CD8-positive, alpha-beta memory T cell (primary cell): ENCODE measurements at regions of chr17 and their contacts with region 1.

Region 1: DNA sequence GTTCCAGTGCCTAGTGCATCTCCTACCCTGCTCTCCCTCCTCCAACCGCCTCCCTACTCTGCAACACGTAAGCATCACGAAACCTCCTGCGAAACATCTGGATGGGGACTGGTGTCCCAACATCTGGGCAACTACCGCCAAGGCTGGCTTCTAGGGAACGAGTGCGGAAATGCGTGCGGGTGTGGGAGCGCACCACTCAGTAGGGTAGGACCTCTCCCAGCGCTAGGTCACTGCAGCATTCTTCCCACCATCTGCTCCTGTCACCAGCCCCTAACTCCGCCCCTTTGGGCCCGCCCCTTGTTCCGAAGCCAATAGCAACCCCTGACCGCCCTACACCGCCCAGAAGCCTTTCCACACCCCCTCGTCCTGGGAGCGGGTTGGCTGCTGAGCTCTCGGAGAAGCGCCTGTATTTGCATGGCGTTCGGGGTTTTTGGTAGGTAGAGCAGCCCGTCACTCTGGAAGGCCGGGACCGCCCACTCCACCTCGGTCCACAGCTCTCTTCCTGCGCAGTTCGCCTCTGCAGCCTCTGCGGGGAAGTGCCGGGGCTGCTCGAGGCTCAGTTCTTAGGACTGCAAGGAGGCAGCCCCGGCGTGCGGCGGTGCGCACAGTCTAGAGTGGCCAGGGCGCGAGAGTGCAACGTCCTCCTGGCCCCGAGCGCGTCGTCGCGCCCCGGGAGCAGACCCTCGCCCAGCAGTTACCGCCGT is at the start of gene HS3ST3B1:
- DNase-seq: peak; percentile 97 to 99 (median 99)
- H3K4me3 ChIP-seq: peak within 1 kb of the TSS; percentile 94
- H3K4me3 Mint-ChIP-seq: peak within 1 kb of the TSS; percentile 92 to 98 (median 96)
- H3K27ac ChIP-seq: peak within 1 kb of the TSS; percentile 82
- H3K27ac Mint-ChIP-seq: peak within 1 kb of the TSS; percentile 81 to 98 (median 92)
- H3K4me1 ChIP-seq: peaks cover 56% of the 10 kb centered on the region
- H3K4me1 Mint-ChIP-seq: peaks cover 61 to 74% (median 69%) of the 10 kb centered on the region in 3 donors
- H3K27me3 ChIP-seq: peaks cover 22% of the 10 kb centered on the region
- H3K27me3 Mint-ChIP-seq: peaks cover 25 to 35% of the 10 kb centered on the region in 2 donors
- total RNA-seq, gene HS3ST3B1: 5.5 to 6.0 TPM

Region 2: GRCh38 chr17:13594762-13595598 is 705.7 kb before region 1 on chr17:
- CTCF ChIA-PET with region 1: interaction called, 34 read pairs
- POLR2A ChIA-PET with region 1: no interaction called
- DNase-seq: peak; percentile 62 to 83 (median 67)
- H3K4me3 ChIP-seq: no peak overlapping the region
- H3K4me3 Mint-ChIP-seq: no peak overlapping the region
- H3K27ac ChIP-seq: no peak overlapping the region
- H3K27ac Mint-ChIP-seq: no peak overlapping the region
- H3K4me1 ChIP-seq: no peaks in the 10 kb centered on the region
- H3K4me1 Mint-ChIP-seq: peaks cover 2 to 5% (median 3%) of the 10 kb centered on the region in 3 donors
- H3K27me3 ChIP-seq: peaks cover 4% of the 10 kb centered on the region
- H3K27me3 Mint-ChIP-seq: peaks cover 15 to 29% of the 10 kb centered on the region in 2 donors

Region 3: GRCh38 chr17:14205989-14206461 is 94.7 kb before region 1 on chr17:
- CTCF ChIA-PET with region 1: interaction called, 13 read pairs
- POLR2A ChIA-PET with region 1: interaction called, 7 read pairs
- DNase-seq: peak in 4 of 5 donors; percentile 37 to 82 (median 65)
- H3K4me3 ChIP-seq: no peak overlapping the region
- H3K4me3 Mint-ChIP-seq: peak overlapping the region; percentile 40 to 90 (median 84)
- H3K27ac ChIP-seq: no peak overlapping the region
- H3K27ac Mint-ChIP-seq: peak overlapping the region; percentile 86 to 99 (median 94)
- H3K4me1 ChIP-seq: peaks cover 58% of the 10 kb centered on the region
- H3K4me1 Mint-ChIP-seq: peaks cover 60 to 74% (median 74%) of the 10 kb centered on the region in 3 donors
- H3K27me3 ChIP-seq: no peaks in the 10 kb centered on the region
- H3K27me3 Mint-ChIP-seq: no peaks in the 10 kb centered on the region

Region 4: DNA sequence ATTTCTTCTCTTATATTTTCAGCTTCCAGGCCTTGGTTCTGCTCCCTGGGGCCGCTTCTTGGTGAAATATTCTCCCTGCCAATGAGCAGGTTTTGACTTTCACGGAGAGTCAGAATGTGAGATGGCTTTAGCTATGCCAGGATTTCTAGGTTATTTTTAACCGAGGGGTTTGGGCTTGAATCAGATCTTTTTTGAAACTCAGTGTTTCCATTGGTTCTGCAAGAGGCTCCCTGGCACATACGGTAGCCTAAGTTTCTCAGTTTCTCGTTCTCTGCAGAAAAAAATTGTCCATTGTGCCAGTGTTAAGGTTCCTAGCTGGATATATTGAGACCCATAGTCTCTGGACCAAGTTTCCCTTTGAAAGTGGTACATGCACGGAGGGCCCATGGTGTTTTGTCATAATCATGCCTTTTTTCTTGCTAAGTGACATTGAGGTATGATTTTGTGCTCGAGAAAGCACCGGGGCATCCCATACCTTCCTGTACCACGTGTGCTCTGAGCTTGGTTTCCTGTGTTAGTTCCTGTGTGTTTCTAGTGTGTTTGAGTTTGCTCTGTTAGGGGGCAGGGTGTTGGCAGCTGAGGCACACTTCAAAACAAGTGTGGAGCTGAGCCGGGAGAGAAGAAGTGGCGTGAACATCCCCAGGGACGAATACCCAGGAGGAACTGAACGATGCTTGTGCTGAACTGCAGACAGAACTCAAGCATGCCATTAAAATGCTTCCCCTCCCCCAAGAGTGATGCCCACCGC is 127.3 kb after region 1 on chr17:
- CTCF ChIA-PET with region 1: interaction called, 26 read pairs
- POLR2A ChIA-PET with region 1: interaction called, 6 read pairs
- DNase-seq: peak; percentile 37 to 73 (median 68)
- H3K4me3 ChIP-seq: peak overlapping the region; percentile 71
- H3K4me3 Mint-ChIP-seq: peak overlapping the region; percentile 58 to 91 (median 79)
- H3K27ac ChIP-seq: no peak overlapping the region
- H3K27ac Mint-ChIP-seq: peak overlapping the region; percentile 36 to 96 (median 65)
- H3K4me1 ChIP-seq: peaks cover 55% of the 10 kb centered on the region
- H3K4me1 Mint-ChIP-seq: peaks cover 48 to 60% (median 58%) of the 10 kb centered on the region in 3 donors
- H3K27me3 ChIP-seq: no peaks in the 10 kb centered on the region
- H3K27me3 Mint-ChIP-seq: peaks cover 0 to 2% of the 10 kb centered on the region in 2 donors